Activated T-helper 1 cell treated with anti-CD3 and anti-CD28 coated beads, Interleukin-12 subunit alpha, Interleukin-12 subunit beta, Interleukin-2, Interleukin-4 antibody, amounts not matched to agents 30 ng/mL and 10 ng/mL and 1 ng/mL, durations not matched to agents 14 hours and 24 hours and 36 hours (primary cell): ENCODE measurements at regions of chr16 and their contacts with region 1.

Region 1: GRCh38 chr16:68289621-68290329 is 21.0 kb downstream of the SLC7A6OS start:
- DNase-seq: peak; percentile 40
- H3K4me3 Mint-ChIP-seq: peak overlapping the region; percentile 67
- H3K27ac Mint-ChIP-seq: peak overlapping the region; percentile 97
- H3K4me1 Mint-ChIP-seq: peaks cover 92% of the 10 kb centered on the region
- H3K27me3 Mint-ChIP-seq: no peaks in the 10 kb centered on the region

Region 2: DNA sequence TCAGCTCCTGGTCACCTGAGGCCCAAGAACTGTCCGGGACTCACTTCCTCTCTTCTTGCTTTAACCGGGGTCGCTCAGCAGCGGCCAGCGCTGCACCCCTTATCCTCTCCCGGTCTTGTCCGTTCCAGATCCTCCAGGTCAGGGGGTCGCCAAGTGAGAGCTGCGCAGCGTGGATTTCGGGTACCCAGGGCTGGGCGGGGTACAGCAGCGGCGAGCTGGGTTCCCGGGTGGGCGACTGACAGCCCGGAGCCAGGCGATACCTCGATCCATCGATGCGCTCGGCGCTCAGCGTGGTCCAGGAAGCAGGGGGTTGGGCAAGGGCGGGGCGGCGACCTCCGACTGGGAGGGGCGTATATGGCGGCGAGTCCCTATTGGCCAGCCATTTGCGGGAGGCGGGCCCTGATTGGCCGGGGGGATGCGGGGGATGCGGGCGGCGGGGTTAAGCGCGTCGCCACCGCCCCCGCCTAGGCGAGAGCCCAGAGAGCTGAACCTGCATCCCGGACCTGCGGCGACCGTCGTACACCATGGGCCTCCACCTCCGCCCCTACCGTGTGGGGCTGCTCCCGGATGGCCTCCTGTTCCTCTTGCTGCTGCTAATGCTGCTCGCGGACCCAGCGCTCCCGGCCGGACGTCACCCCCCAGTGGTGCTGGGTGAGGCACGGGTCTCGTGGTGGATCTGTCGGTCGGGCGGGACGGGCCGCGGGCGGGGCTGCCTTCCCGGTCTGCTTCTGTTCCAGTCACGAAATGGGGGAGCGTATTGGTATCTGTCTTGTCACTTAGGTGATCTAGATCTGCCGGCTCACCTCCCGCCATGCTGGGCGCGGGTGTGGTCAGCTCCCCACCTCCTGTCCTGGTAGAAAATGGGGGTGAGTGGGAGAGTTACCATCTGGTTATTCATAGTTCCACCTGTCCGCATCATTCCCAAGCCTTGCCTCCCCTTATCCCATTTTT is 44.6 kb before region 1 on chr16 and contains the start of gene PLA2G15:
- intact Hi-C with region 1: no loop called
- DNase-seq: peak; percentile 93
- H3K4me3 Mint-ChIP-seq: peak within 1 kb of the TSS; percentile 99
- H3K27ac Mint-ChIP-seq: peak within 1 kb of the TSS; percentile 82
- H3K4me1 Mint-ChIP-seq: peaks cover 18% of the 10 kb centered on the region
- H3K27me3 Mint-ChIP-seq: peaks cover 5% of the 10 kb centered on the region
- total RNA-seq, gene PLA2G15: 8.6 and 8.8 TPM in 2 replicates

Region 3: GRCh38 chr16:68270353-68270752 is 19.4 kb before region 1 on chr16:
- intact Hi-C with region 1: loop called (anchors 1 kb)
- DNase-seq: no peak
- H3K4me3 Mint-ChIP-seq: peak overlapping the region; percentile 34
- H3K27ac Mint-ChIP-seq: peak overlapping the region; percentile 85
- H3K4me1 Mint-ChIP-seq: peaks cover 85% of the 10 kb centered on the region
- H3K27me3 Mint-ChIP-seq: no peaks in the 10 kb centered on the region

Region 4: DNA sequence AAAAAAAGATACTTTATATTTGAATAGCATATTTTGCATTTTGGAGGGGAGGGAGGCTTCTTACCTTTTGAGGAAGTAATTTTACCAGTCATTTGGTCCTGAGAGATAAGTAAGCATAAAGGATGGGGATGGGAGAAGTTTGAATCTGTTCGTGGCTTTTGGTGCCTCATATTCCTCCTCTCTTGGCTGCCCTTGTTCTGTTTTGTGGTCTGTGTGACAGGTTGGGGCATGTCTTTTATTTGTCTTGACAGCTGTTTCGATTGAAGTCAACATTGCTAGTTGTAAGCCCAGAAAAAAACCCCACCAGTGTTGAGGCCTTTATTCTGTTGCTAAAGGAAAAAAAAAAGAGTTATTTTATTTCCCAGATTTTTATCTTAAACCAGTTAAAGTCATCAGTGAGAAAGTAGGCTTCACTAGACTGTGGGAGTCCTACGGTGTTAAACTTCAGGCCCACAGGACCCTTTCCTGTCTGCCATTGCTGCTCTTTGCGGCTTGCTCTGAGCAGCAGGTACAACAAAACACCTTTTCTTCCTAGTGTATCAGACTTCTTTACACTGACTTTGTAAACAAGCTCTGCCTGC is 14.1 kb before region 1 on chr16:
- intact Hi-C with region 1: loop called (anchors 1 kb)
- DNase-seq: peak; percentile 40
- H3K4me3 Mint-ChIP-seq: peak overlapping the region; percentile 65
- H3K27ac Mint-ChIP-seq: peak overlapping the region; percentile 90
- H3K4me1 Mint-ChIP-seq: peaks cover 63% of the 10 kb centered on the region
- H3K27me3 Mint-ChIP-seq: no peaks in the 10 kb centered on the region

Region 5: GRCh38 chr16:68310761-68311511 is 21.2 kb after region 1 on chr16 and contains the starts of genes PRMT7 and SLC7A6OS:
- intact Hi-C with region 1: loop called (anchors 1 kb)
- DNase-seq: peak; percentile 92
- H3K4me3 Mint-ChIP-seq: peak within 1 kb of the TSS; percentile 99
- H3K27ac Mint-ChIP-seq: peak within 1 kb of the TSS; percentile 98
- H3K4me1 Mint-ChIP-seq: peaks cover 43% of the 10 kb centered on the region
- H3K27me3 Mint-ChIP-seq: no peaks in the 10 kb centered on the region
- total RNA-seq, gene PRMT7: 80.6 and 85.2 TPM in 2 replicates
- total RNA-seq, gene SLC7A6OS: 26.5 and 27.6 TPM in 2 replicates

Region 6: GRCh38 chr16:68319185-68319908 is 29.6 kb after region 1 on chr16:
- intact Hi-C with region 1: loop called (anchors 1 kb)
- DNase-seq: peak; percentile 43
- H3K4me3 Mint-ChIP-seq: peak overlapping the region; percentile 66
- H3K27ac Mint-ChIP-seq: peak overlapping the region; percentile 89
- H3K4me1 Mint-ChIP-seq: peaks cover 38% of the 10 kb centered on the region
- H3K27me3 Mint-ChIP-seq: no peaks in the 10 kb centered on the region

Region 7: GRCh38 chr16:68328151-68328859 is 38.5 kb after region 1 on chr16:
- intact Hi-C with region 1: loop called (anchors 1 kb)
- DNase-seq: peak; percentile 73
- H3K4me3 Mint-ChIP-seq: no peak overlapping the region
- H3K27ac Mint-ChIP-seq: no peak overlapping the region
- H3K4me1 Mint-ChIP-seq: peaks cover 41% of the 10 kb centered on the region
- H3K27me3 Mint-ChIP-seq: no peaks in the 10 kb centered on the region